K562 (cell line): ENCODE measurements at regions of chr12 and their contacts with region 1.

Region 1: GRCh38 chr12:51025836-51026638 is at the start of gene SLC11A2:
- DNase-seq: peak; percentile 98 to 99 (median 98)
- ATAC-seq: peak; percentile 91
- H3K4me3 ChIP-seq: peak within 1 kb of the TSS; percentile 66
- H3K27ac ChIP-seq: peak within 1 kb of the TSS; percentile 91
- H3K4me1 ChIP-seq: peaks cover 32 to 38% of the 10 kb centered on the region in 2 experiments
- H3K27me3 ChIP-seq: no peaks in the 10 kb centered on the region
- CTCF ChIP-seq: peak; percentile 18 to 28 (median 18); a peak in 3 of 6 replicates
- EP300 ChIP-seq: no peak; the same call in 1 of the 2 replicates
- POLR2A ChIP-seq: peak; percentile 83
- RAD21 ChIP-seq: peak in 1 of 2 experiments; percentile 12; a peak in 1 of 4 replicates
- polyA plus RNA-seq, gene SLC11A2: 21.1 to 27.6 TPM

Region 2: GRCh38 chr12:50924439-50925341 is 101.3 kb before region 1 on chr12:
- CTCF ChIA-PET with region 1: no interaction called
- POLR2A ChIA-PET with region 1: interaction called, 4 read pairs
- in situ Hi-C with region 1: no loop called
- intact Hi-C with region 1: loop called (anchors 5 kb)
- DNase-seq: peak; percentile 84 to 93 (median 87)
- ATAC-seq: peak; percentile 87
- H3K4me3 ChIP-seq: peak overlapping the region; percentile 61
- H3K27ac ChIP-seq: peak overlapping the region; percentile 95
- H3K4me1 ChIP-seq: peaks cover 3 to 21% of the 10 kb centered on the region in 2 experiments; a peak in 4 of 5 replicates
- H3K27me3 ChIP-seq: no peaks in the 10 kb centered on the region
- CTCF ChIP-seq: no peak
- EP300 ChIP-seq: no peak
- POLR2A ChIP-seq: peak; percentile 66
- RAD21 ChIP-seq: no peak

Region 3: GRCh38 chr12:50986966-50987737 is 38.9 kb before region 1 on chr12:
- CTCF ChIA-PET with region 1: no interaction called
- POLR2A ChIA-PET with region 1: interaction called, 3 read pairs
- in situ Hi-C with region 1: no loop called
- intact Hi-C with region 1: loop called (anchors 2 kb)
- DNase-seq: peak; percentile 27 to 56 (median 40)
- ATAC-seq: peak; percentile 90
- H3K4me3 ChIP-seq: no peak overlapping the region
- H3K27ac ChIP-seq: no peak overlapping the region
- H3K4me1 ChIP-seq: no peaks in the 10 kb centered on the region
- H3K27me3 ChIP-seq: no peaks in the 10 kb centered on the region
- CTCF ChIP-seq: peak; percentile 58 to 72 (median 62)
- EP300 ChIP-seq: no peak
- POLR2A ChIP-seq: no peak
- RAD21 ChIP-seq: peak; percentile 86 to 88

Region 4: GRCh38 chr12:51011955-51012354 is 14.1 kb before region 1 on chr12:
- CTCF ChIA-PET with region 1: interaction called, 3 read pairs
- POLR2A ChIA-PET with region 1: interaction called, 11 read pairs
- in situ Hi-C with region 1: no loop called
- intact Hi-C with region 1: no loop called
- DNase-seq: peak in 1 of 4 experiments; percentile 23
- ATAC-seq: peak; percentile 76
- H3K4me3 ChIP-seq: no peak overlapping the region
- H3K27ac ChIP-seq: no peak overlapping the region
- H3K4me1 ChIP-seq: peaks cover 6 to 13% of the 10 kb centered on the region in 2 experiments; a peak in 4 of 5 replicates
- H3K27me3 ChIP-seq: no peaks in the 10 kb centered on the region
- CTCF ChIP-seq: no peak
- EP300 ChIP-seq: no peak
- POLR2A ChIP-seq: no peak
- RAD21 ChIP-seq: no peak